Activated CD8-positive, alpha-beta T cell treated with anti-CD3 and anti-CD28 coated beads, Interleukin-2, amount 10 ng/mL, durations not matched to agents 7 days and 5 days (primary cell): ENCODE measurements at regions of chr2 and their contacts with region 1.

Region 1: GRCh38 chr2:120231974-120232635 is 8.9 kb upstream of the TMEM185B start:
- DNase-seq: peak; percentile 91
- ATAC-seq: peak; percentile 91
- H3K4me3 Mint-ChIP-seq: peak overlapping the region; percentile 99
- H3K27ac Mint-ChIP-seq: peak overlapping the region; percentile 99
- H3K4me1 Mint-ChIP-seq: peaks cover 55% of the 10 kb centered on the region
- H3K27me3 Mint-ChIP-seq: no peaks in the 10 kb centered on the region

Region 2: GRCh38 chr2:120169020-120169419 is 63.1 kb before region 1 on chr2:
- CTCF ChIA-PET with region 1: no interaction called
- POLR2A ChIA-PET with region 1: no interaction called
- DNase-seq: no peak
- ATAC-seq: no peak
- H3K4me3 Mint-ChIP-seq: no peak overlapping the region
- H3K27ac Mint-ChIP-seq: no peak overlapping the region
- H3K4me1 Mint-ChIP-seq: no peaks in the 10 kb centered on the region
- H3K27me3 Mint-ChIP-seq: no peaks in the 10 kb centered on the region

Region 3: GRCh38 chr2:120252225-120253021 is 20.3 kb after region 1 on chr2 and contains the start of gene RALB:
- CTCF ChIA-PET with region 1: interaction called, 7 read pairs
- POLR2A ChIA-PET with region 1: interaction called, 17 read pairs
- DNase-seq: peak; percentile 100
- ATAC-seq: peak; percentile 97
- H3K4me3 Mint-ChIP-seq: peak within 1 kb of the TSS; percentile 99
- H3K27ac Mint-ChIP-seq: peak within 1 kb of the TSS; percentile 92
- H3K4me1 Mint-ChIP-seq: peaks cover 66% of the 10 kb centered on the region
- H3K27me3 Mint-ChIP-seq: peaks cover 23% of the 10 kb centered on the region
- total RNA-seq, gene RALB: 39.4 to 45.4 TPM